ENCODE measurements at regions of chr2 and their contacts with region 1.

Region 1: GRCh38 chr2:236512902-236513435 is 56.7 kb upstream of the ACKR3 start:
- DNase-seq: peak; percentile 66 to 78 (median 71)
- ATAC-seq: peak; percentile 79
- H3K4me3 ChIP-seq: no peak overlapping the region
- H3K27ac ChIP-seq: no peak overlapping the region
- H3K4me1 ChIP-seq: no peaks in the 10 kb centered on the region
- H3K27me3 ChIP-seq: no peaks in the 10 kb centered on the region
- CTCF ChIP-seq: peak; percentile 80 to 92 (median 86)
- POLR2A ChIP-seq: no peak

Region 2: DNA sequence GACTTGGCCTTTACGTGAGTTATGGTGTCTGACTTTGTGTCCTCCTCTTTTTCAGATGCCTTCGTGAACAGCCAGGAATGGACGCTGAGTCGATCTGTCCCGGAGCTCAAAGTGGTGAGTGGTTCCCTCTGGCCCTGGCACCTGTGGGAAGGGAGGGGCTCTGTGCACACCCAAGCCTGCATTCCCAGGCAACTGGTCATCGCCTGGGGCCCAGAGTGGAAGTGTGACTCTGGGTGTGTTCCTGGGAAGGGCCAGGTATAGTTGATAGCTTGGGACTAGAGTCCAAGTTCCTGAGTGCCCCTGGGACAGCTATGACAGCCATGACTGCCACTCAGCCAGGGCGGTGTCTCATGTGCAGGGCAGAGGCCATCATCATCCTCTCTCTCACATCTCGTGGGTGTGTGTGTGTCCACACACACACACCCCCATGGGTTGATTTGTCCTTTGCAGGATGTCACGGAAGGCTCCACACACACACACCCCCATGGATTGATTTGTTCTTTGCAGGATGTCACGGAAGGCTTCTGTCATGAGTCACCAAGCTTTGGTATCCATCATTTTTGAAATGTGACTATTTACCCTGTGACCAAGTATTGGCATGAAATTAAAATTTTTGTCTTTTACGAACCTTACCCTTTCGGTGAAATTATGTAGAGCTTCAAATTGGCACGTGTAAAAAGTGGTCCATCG is 803.7 kb before region 1 on chr2:
- intact Hi-C with region 1: no loop called
- DNase-seq: peak in 2 of 4 donors; percentile 17 to 32
- ATAC-seq: peak; percentile 33
- H3K4me3 ChIP-seq: no peak overlapping the region
- H3K27ac ChIP-seq: no peak overlapping the region
- H3K4me1 ChIP-seq: no peaks in the 10 kb centered on the region
- H3K27me3 ChIP-seq: no peaks in the 10 kb centered on the region
- CTCF ChIP-seq: no peak
- POLR2A ChIP-seq: no peak

Region 3: DNA sequence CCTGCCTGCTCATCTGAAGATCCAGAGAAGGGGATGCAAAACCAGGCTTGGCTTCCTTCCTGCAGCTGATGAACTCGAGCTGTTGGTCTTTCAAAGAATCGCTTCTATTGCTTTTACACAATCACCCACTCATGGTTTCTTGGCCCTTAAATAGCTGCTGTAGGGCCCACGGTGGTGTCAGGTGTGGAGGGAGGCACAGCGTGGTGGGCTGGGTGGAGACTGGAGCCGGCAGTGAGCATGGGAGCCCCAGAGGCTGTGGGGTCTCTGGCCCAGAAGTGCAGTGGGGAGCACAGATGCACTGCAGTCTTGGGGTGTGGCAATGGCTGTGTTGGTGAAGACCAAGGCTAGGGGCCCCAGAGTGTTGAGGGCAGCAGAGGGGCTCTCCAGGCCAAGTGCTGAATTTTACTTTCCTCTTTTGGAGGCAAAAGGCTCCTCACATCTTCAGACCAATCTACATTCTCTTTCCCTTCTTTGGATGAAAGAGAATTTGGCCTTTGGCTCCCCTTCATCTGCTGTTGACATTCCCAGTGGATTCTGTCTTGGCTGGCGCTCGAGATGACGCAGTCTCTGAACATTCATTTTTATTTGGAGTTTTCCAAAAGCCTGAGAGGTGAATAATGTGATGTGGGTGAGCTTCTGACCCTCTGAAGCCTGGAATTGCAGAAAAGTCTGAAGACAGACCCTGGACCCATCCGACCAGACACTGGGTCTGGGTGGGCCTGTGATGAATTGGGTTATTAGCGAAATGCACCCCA is 178.7 kb before region 1 on chr2:
- intact Hi-C with region 1: no loop called
- DNase-seq: peak in 2 of 4 donors; percentile 19 to 31
- ATAC-seq: no peak
- H3K4me3 ChIP-seq: no peak overlapping the region
- H3K27ac ChIP-seq: no peak overlapping the region
- H3K4me1 ChIP-seq: no peaks in the 10 kb centered on the region
- H3K27me3 ChIP-seq: no peaks in the 10 kb centered on the region
- CTCF ChIP-seq: no peak
- POLR2A ChIP-seq: no peak

Region 4: GRCh38 chr2:236558993-236559978 is 46.3 kb after region 1 on chr2:
- intact Hi-C with region 1: loop called (anchors 5 kb)
- DNase-seq: no peak
- ATAC-seq: no peak
- H3K4me3 ChIP-seq: no peak overlapping the region
- H3K27ac ChIP-seq: no peak overlapping the region
- H3K4me1 ChIP-seq: no peaks in the 10 kb centered on the region
- H3K27me3 ChIP-seq: no peaks in the 10 kb centered on the region
- CTCF ChIP-seq: no peak
- POLR2A ChIP-seq: no peak

Region 5: GRCh38 chr2:237026981-237027711 is 514.2 kb after region 1 on chr2:
- intact Hi-C with region 1: loop called (anchors 10 kb)
- DNase-seq: peak; percentile 71 to 78 (median 74)
- ATAC-seq: peak; percentile 80
- H3K4me3 ChIP-seq: no peak overlapping the region
- H3K27ac ChIP-seq: no peak overlapping the region
- H3K4me1 ChIP-seq: no peaks in the 10 kb centered on the region
- H3K27me3 ChIP-seq: no peaks in the 10 kb centered on the region
- CTCF ChIP-seq: peak; percentile 64 to 96 (median 86)
- POLR2A ChIP-seq: no peak

Measured in body of pancreas (tissue), 4 donors.